AG04450 (cell line): ENCODE measurements at regions of chr3 and their contacts with region 1.

Region 1: GRCh38 chr3:153161138-153161713 is 800 bp upstream of the RAP2B start:
- DNase-seq: peak; percentile 100
- H3K4me3 ChIP-seq: peak overlapping the region; percentile 96
- H3K27ac ChIP-seq: peak overlapping the region; percentile 98
- H3K27me3 ChIP-seq: no peaks in the 10 kb centered on the region
- CTCF ChIP-seq: no peak

Region 2: GRCh38 chr3:153138276-153139210 is 22.7 kb before region 1 on chr3:
- CTCF ChIA-PET with region 1: interaction called, 4 read pairs
- POLR2A ChIA-PET with region 1: interaction called, 25 read pairs
- DNase-seq: peak; percentile 80
- H3K4me3 ChIP-seq: no peak overlapping the region
- H3K27ac ChIP-seq: peak overlapping the region; percentile 80
- H3K27me3 ChIP-seq: no peaks in the 10 kb centered on the region
- CTCF ChIP-seq: no peak

Region 3: DNA sequence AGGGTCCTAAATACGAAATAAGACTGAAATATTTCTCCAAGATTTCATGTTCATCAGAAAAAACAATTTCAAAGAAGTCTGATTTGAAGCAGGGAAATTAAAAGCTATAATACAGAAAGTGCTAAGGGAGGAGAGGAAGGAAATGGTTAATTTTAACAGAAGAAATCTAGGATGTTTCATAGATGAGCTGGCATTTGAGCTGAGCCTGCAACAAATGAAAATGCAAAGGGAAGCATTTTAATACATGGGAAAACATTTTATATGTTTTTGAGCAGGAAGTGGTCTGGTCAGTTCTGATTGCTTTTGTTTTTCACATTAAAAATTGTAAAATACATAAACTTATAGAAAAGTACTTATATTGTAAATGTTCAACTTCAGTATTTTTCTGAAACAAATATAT is 16.4 kb before region 1 on chr3:
- CTCF ChIA-PET with region 1: interaction called, 4 read pairs
- POLR2A ChIA-PET with region 1: interaction called, 25 read pairs
- DNase-seq: no peak
- H3K4me3 ChIP-seq: no peak overlapping the region
- H3K27ac ChIP-seq: no peak overlapping the region
- H3K27me3 ChIP-seq: no peaks in the 10 kb centered on the region
- CTCF ChIP-seq: no peak

Region 4: GRCh38 chr3:153439777-153440176 is 278.6 kb after region 1 on chr3:
- CTCF ChIA-PET with region 1: interaction called, 16 read pairs
- POLR2A ChIA-PET with region 1: no interaction called
- DNase-seq: no peak
- H3K4me3 ChIP-seq: no peak overlapping the region
- H3K27ac ChIP-seq: no peak overlapping the region
- H3K27me3 ChIP-seq: no peaks in the 10 kb centered on the region
- CTCF ChIP-seq: peak; percentile 48